ENCODE measurements at regions of chr11 and their contacts with region 1.

Region 1: GRCh38 chr11:73295231-73295995 is 12.7 kb upstream of the ARHGEF17 start:
- DNase-seq: peak; percentile 39
- H3K4me3 ChIP-seq: no peak overlapping the region
- H3K27ac ChIP-seq: no peak overlapping the region
- H3K4me1 ChIP-seq: no peaks in the 10 kb centered on the region
- H3K27me3 ChIP-seq: no peaks in the 10 kb centered on the region
- CTCF ChIP-seq: peak; percentile 59 to 75 (median 68)
- POLR2A ChIP-seq: no peak

Region 2: GRCh38 chr11:73376160-73376802 is 80.9 kb after region 1 on chr11 and contains the start of gene RELT:
- intact Hi-C with region 1: loop called (anchors 5 kb)
- DNase-seq: peak; percentile 78
- H3K4me3 ChIP-seq: peak within 1 kb of the TSS; percentile 50 to 60
- H3K27ac ChIP-seq: peak within 1 kb of the TSS; percentile 62 to 77
- H3K4me1 ChIP-seq: peaks cover 9% of the 10 kb centered on the region
- H3K27me3 ChIP-seq: no peaks in the 10 kb centered on the region
- CTCF ChIP-seq: peak; percentile 81 to 99 (median 92)
- POLR2A ChIP-seq: peak; percentile 96
- total RNA-seq, gene RELT: 0.96 to 10.3 TPM

Region 3: DNA sequence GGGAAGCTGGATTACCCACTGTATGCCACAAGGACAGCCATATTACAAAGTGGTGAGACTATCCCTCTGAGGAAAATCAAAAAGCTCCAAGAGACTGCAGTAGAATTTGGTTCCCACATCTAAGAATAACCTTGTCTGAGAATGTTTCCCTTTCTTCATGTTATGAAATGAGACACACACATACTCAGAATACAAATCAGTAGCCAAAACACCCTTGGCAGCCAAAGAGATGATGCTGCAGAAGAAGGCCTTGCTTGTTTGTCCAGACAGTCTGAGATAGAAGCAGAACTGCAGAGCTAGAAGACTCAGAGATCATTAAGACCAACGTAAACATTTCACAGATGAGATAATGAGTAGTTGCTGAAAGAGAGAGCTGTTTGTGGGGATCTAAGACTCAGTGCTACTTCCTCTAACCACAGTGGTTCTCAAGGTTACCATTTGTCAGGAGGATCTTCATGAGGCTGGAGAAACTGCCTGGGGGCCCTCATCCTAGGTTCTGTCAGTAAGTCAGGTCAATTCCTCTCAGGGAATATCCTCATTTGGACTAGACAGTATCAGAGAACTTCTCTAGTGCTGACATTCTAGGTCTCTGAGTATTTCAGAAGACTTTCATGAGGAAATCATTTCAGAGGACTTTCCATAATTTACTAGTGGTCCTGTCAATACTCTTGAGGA is 119.7 kb after region 1 on chr11:
- intact Hi-C with region 1: no loop called
- DNase-seq: no peak
- H3K4me3 ChIP-seq: no peak overlapping the region
- H3K27ac ChIP-seq: no peak overlapping the region
- H3K4me1 ChIP-seq: no peaks in the 10 kb centered on the region
- H3K27me3 ChIP-seq: no peaks in the 10 kb centered on the region
- CTCF ChIP-seq: no peak
- POLR2A ChIP-seq: no peak

Region 4: DNA sequence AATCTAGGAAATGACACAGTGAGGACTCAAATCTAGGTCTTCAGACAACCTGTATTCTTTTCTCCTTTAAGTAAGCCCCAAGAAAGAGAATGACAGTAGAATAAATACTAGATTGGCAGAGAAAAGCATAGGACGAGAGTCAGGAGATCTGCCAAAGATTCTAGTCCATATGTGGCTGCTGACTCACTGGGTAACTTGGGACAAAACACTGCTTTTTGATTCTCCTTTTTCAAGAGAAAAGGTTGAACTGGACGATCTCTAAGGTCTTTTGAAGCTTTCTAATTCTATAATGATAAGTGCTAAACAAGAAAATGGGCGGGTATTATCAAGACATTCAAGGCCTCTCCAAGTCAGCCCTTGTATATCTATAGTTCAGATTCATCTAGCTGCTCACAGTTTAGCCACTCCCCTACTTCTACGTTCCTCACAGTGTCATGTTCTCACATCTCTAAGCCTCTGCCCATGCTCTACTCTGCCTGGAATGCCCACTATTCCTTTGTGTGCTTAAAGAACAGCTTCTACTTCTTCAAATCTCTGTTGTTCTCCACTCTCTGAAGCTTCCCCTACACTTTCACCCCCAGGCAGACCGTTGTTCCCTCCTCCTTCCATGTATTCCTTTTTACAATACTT is 133.8 kb after region 1 on chr11:
- intact Hi-C with region 1: no loop called
- DNase-seq: no peak
- H3K4me3 ChIP-seq: no peak overlapping the region
- H3K27ac ChIP-seq: no peak overlapping the region
- H3K4me1 ChIP-seq: no peaks in the 10 kb centered on the region
- H3K27me3 ChIP-seq: no peaks in the 10 kb centered on the region
- CTCF ChIP-seq: no peak
- POLR2A ChIP-seq: no peak

Measured in prostate gland (tissue), 2 donors.